ENCODE measurements at regions of chr2 and their contacts with region 1.

Region 1: GRCh38 chr2:192749606-192750200 is 555.0 kb upstream of the TMEFF2 start:
- DNase-seq: peak in 1 of 2 experiments; percentile 6
- H3K4me3 ChIP-seq: no peak overlapping the region
- H3K4me3 Mint-ChIP-seq: no peak overlapping the region
- H3K27ac Mint-ChIP-seq: no peak overlapping the region
- H3K4me1 ChIP-seq: no peaks in the 10 kb centered on the region
- H3K4me1 Mint-ChIP-seq: no peaks in the 10 kb centered on the region
- H3K27me3 ChIP-seq: no peaks in the 10 kb centered on the region
- H3K27me3 Mint-ChIP-seq: no peaks in the 10 kb centered on the region
- CTCF ChIP-seq: peak; percentile 42 to 46

Region 2: DNA sequence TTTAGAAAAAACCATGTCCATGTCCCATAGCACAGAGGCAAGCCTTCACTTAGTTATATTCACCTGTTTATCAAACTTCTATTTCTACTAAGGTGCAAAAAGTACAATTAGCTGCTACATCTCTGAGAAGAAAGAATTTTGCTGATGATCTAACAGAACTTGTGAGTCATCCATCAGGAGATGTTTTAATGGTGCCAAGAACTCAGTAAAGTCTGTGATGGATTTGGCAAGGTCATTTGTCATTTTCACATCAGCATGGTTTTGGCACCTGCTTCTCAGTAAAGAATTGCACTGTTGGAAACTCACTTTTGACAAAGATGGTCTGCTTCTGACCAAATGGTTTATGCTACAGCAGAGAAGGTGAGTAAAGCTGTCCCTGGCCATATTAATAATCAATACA is 359.3 kb before region 1 on chr2:
- CTCF ChIA-PET with region 1: no interaction called
- POLR2A ChIA-PET with region 1: no interaction called
- intact Hi-C with region 1: no loop called
- DNase-seq: no peak
- H3K4me3 ChIP-seq: no peak overlapping the region
- H3K4me3 Mint-ChIP-seq: no peak overlapping the region
- H3K27ac Mint-ChIP-seq: no peak overlapping the region
- H3K4me1 ChIP-seq: no peaks in the 10 kb centered on the region
- H3K4me1 Mint-ChIP-seq: no peaks in the 10 kb centered on the region
- H3K27me3 ChIP-seq: no peaks in the 10 kb centered on the region
- H3K27me3 Mint-ChIP-seq: no peaks in the 10 kb centered on the region
- CTCF ChIP-seq: no peak

Region 3: DNA sequence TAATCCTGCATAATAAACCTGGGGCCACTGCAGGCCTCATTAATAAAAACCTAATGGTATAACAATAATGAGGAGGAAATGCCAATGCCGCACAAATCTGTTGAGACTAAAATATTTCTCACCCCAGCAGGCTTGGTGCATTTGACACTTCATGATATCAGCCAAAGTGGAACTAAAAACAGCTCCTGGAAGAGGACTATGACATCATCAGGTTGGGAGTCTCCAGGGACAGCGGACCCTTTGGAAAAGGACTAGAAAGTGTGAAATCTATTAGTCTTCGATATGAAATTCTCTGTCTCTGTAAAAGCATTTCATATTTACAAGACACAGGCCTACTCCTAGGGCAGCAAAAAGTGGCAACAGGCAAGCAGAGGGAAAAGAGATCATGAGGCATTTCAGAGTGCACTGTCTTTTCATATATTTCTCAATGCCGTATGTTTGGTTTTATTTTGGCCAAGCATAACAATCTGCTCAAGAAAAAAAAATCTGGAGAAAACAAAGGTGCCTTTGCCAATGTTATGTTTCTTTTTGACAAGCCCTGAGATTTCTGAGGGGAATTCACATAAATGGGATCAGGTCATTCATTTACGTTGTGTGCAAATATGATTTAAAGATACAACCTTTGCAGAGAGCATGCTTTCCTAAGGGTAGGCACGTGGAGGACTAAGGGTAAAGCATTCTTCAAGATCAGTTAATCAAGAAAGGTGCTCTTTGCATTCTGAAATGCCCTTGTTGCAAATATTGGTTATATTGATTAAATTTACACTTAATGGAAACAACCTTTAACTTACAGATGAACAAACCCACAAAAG is 26.0 kb after region 1 on chr2:
- CTCF ChIA-PET with region 1: no interaction called
- POLR2A ChIA-PET with region 1: no interaction called
- intact Hi-C with region 1: no loop called
- DNase-seq: no peak
- H3K4me3 ChIP-seq: no peak overlapping the region
- H3K4me3 Mint-ChIP-seq: no peak overlapping the region
- H3K27ac Mint-ChIP-seq: no peak overlapping the region
- H3K4me1 ChIP-seq: no peaks in the 10 kb centered on the region
- H3K4me1 Mint-ChIP-seq: no peaks in the 10 kb centered on the region
- H3K27me3 ChIP-seq: no peaks in the 10 kb centered on the region
- H3K27me3 Mint-ChIP-seq: no peaks in the 10 kb centered on the region
- CTCF ChIP-seq: no peak

Region 4: DNA sequence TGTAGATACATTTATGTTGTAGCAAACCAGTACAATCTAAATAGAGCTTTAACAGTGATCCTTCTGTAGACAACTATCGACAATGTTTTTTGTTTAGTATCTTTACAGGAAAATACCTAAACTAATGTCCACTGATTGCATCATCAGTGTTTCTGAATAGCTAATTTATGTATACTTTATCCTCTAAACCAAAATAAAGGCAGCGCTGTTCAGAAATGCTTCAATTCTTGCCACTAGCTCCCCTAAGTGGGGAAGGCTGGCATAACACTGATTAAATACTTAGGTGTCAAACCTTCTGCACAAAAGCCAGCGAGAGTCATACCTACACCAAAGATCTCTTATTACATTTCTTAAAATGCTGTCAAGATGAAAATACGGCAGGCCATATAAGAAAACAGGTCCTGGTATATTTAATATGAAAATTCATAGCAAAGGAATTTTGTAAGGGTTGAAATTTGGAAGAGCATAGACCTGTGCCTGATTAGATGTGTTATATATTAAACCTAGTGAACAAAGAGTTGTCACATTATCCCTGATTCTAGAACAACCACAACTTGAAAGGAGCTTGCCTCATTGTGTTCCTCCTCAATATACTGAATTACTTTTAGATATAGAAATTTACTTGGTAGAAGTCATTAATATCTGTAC is 1213.9 kb after region 1 on chr2:
- CTCF ChIA-PET with region 1: no interaction called
- POLR2A ChIA-PET with region 1: no interaction called
- intact Hi-C with region 1: loop called (anchors 5 kb)
- DNase-seq: peak in 1 of 2 experiments; percentile 54
- H3K4me3 ChIP-seq: no peak overlapping the region
- H3K4me3 Mint-ChIP-seq: no peak overlapping the region
- H3K27ac Mint-ChIP-seq: no peak overlapping the region
- H3K4me1 ChIP-seq: 0 out of 2 replicates have a peak, but pooled peaks cover 4% of the 10 kb centered on the region
- H3K4me1 Mint-ChIP-seq: no peaks in the 10 kb centered on the region
- H3K27me3 ChIP-seq: no peaks in the 10 kb centered on the region
- H3K27me3 Mint-ChIP-seq: no peaks in the 10 kb centered on the region
- CTCF ChIP-seq: peak; percentile 62 to 68

Measured in Caco-2 (cell line).